Activated naive CD4-positive, alpha-beta T cell treated with anti-CD3 and anti-CD28 coated beads for 36 hours (primary cell): ENCODE measurements at regions of chr10 and their contacts with region 1.

Region 1: GRCh38 chr10:6647811-6648526 is 67.9 kb upstream of the PRKCQ start:
- DNase-seq: peak; percentile 91
- H3K4me3 Mint-ChIP-seq: peak overlapping the region; percentile 12
- H3K27ac Mint-ChIP-seq: peak overlapping the region; percentile 70
- H3K4me1 Mint-ChIP-seq: peaks cover 62% of the 10 kb centered on the region
- H3K27me3 Mint-ChIP-seq: no peaks in the 10 kb centered on the region

Region 2: DNA sequence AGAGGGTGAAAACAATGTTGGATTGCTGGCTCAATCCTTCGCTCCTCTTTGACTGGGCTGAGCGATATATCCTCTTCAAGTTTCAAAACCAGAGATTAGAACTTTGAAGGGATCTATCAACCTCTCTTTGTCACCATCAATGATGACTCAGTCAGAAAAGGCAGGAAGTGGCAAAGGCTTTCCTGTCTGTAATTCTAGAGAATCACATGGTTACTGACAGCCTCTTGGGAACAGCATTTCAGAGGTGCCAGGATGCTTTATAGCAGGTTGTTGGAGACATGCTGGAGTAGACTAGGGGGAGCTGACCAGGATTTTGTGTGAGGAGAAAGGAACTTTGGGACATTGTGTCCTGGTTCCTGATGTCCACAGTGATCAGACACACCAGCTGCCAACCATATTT is 149.2 kb before region 1 on chr10:
- CTCF ChIA-PET with region 1: no interaction called
- intact Hi-C with region 1: loop called (anchors 2 kb)
- DNase-seq: peak; percentile 67
- H3K4me3 Mint-ChIP-seq: peak overlapping the region; percentile 20
- H3K27ac Mint-ChIP-seq: peak overlapping the region; percentile 85
- H3K4me1 Mint-ChIP-seq: peaks cover 47% of the 10 kb centered on the region
- H3K27me3 Mint-ChIP-seq: no peaks in the 10 kb centered on the region

Region 3: DNA sequence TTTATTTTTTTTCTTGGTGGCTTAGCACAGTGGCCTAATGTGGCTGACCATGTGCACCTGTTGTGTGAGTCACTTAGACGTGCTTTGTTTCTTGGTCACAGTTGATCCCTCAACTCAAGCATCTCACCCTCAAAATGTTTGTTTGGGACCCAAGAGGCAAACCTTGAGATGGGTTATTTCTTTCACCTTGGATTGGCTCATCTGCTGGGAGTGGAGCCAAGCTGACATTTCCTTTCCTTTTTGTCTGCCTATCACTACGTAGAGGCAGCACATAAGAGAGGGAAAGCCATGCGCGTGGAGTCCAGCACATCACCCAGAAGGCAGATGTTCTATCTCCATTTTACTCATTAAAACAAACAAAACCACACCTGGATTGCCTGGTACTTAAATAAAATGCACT is 61.5 kb before region 1 on chr10:
- CTCF ChIA-PET with region 1: interaction called, 48 read pairs
- intact Hi-C with region 1: no loop called
- DNase-seq: peak; percentile 75
- H3K4me3 Mint-ChIP-seq: peak overlapping the region; percentile 92
- H3K27ac Mint-ChIP-seq: peak overlapping the region; percentile 99
- H3K4me1 Mint-ChIP-seq: peaks cover 75% of the 10 kb centered on the region
- H3K27me3 Mint-ChIP-seq: no peaks in the 10 kb centered on the region

Region 4: GRCh38 chr10:6607778-6608177 is 40.2 kb before region 1 on chr10:
- CTCF ChIA-PET with region 1: interaction called, 11 read pairs
- intact Hi-C with region 1: loop called (anchors 1 kb)
- DNase-seq: no peak
- H3K4me3 Mint-ChIP-seq: peak overlapping the region; percentile 65
- H3K27ac Mint-ChIP-seq: peak overlapping the region; percentile 94
- H3K4me1 Mint-ChIP-seq: peaks cover 72% of the 10 kb centered on the region
- H3K27me3 Mint-ChIP-seq: no peaks in the 10 kb centered on the region

Region 5: DNA sequence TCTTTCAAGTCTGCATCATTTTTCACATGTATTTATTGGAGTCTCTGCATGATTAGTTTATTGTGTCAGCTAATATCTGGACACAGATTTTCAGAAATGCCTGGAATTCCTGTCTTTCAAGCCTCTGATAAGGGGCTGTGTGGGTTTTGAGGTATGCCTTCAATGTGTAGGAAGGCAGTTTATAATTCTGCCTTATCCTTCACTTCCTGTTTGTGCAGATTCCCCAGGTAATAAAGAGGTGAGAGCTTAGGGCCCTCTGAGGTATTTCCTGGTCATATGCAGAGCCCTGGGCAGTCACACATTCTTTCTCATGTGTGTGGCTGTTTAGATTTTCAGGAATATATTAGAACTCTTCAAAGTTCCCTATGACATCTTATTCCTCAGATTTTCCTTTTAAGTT is 11.5 kb after region 1 on chr10:
- CTCF ChIA-PET with region 1: interaction called, 17 read pairs
- intact Hi-C with region 1: no loop called
- DNase-seq: no peak
- H3K4me3 Mint-ChIP-seq: no peak overlapping the region
- H3K27ac Mint-ChIP-seq: no peak overlapping the region
- H3K4me1 Mint-ChIP-seq: peaks cover 5% of the 10 kb centered on the region
- H3K27me3 Mint-ChIP-seq: no peaks in the 10 kb centered on the region

Region 6: DNA sequence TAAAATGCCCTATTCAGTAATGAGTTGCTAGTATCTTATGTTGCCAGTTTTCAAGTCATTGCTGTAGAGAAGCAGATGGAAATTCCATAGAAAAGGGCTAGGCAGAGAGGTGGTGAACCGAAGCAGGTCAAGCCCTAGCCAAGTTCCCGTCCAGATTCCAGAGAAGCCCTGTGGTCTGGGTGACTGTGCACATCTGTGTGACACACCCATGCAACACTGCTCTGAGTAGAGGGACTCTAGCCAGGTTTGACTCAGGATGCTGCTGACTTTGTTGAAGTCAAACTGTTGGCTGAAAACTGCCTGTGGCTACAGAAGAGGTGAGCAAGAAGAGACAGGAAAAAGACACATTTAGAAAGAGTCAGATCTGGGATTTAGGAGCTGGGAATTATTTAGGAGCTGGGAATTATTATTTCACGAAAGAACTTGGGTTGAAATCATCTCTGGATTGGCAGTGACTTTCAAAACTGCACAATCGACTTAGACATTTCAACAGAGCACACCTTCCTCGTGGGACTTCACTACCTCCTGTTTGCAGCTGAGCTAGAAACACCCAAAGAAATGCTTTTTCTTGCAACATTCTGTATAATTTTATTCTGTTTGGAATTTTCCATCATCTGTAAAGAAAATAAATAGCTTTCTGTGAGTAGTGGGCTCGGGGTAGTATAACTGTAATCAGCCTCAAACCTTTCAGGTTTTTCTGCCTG is 81.3 kb after region 1 on chr10:
- CTCF ChIA-PET with region 1: no interaction called
- intact Hi-C with region 1: no loop called
- DNase-seq: no peak
- H3K4me3 Mint-ChIP-seq: no peak overlapping the region
- H3K27ac Mint-ChIP-seq: no peak overlapping the region
- H3K4me1 Mint-ChIP-seq: no peaks in the 10 kb centered on the region
- H3K27me3 Mint-ChIP-seq: peaks cover 42% of the 10 kb centered on the region